A549 (cell line): ENCODE measurements at regions of chr15 and their contacts with region 1.

Region 1: DNA sequence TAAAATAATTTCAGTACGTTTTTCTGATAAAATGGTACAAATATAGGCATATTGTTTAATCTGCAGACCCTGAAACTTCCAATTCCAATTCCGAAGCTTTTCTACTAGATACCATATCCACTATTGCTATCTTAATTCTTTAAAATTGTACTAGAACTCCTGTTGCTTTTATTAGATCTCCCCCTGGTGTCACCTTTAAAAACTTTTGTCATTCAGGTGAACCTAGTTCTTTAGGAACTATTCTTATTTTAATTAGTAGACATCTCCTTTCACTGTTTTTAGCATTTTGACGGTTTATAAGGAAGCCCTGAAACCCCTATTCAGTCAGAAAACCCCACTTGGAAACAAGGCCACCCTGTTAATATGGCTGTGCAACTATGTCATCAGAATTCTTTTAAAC is 22.4 kb downstream of the C2CD4B start:
- DNase-seq: no peak
- ATAC-seq: no peak
- H3K4me3 ChIP-seq: no peak overlapping the region
- H3K27ac ChIP-seq: no peak overlapping the region; a peak in 1 of 6 replicates
- H3K4me1 ChIP-seq: 0 out of 3 replicates have a peak, but pooled peaks cover 6% of the 10 kb centered on the region
- CTCF ChIP-seq: peak; percentile 43
- EP300 ChIP-seq: no peak
- POLR2A ChIP-seq: no peak
- RAD21 ChIP-seq: peak; percentile 59 to 61

Region 2: DNA sequence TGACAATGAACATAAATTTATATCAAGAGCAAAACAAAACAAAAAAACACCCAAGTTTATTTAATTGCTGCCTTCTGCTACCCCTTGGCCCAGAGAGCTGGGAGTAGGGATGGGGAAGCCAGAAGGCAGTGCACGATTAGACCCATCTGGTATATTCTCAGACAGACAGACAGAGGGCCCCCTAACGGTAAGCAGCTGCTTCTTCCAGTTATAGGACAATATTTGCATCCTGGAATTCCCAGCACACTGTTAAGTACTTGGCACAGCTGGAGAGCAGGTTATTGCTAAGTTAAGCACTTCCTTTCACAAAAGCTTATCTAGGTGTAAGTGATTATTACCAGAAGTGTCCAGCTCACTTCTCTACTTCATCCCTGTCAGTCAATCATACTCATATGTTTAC is 17.0 kb before region 1 on chr15:
- CTCF ChIA-PET with region 1: interaction called, 13 read pairs
- POLR2A ChIA-PET with region 1: no interaction called
- DNase-seq: peak in 1 of 2 experiments; percentile 74
- ATAC-seq: peak; percentile 77 to 87
- H3K4me3 ChIP-seq: no peak overlapping the region
- H3K27ac ChIP-seq: peak overlapping the region in 1 of 2 experiments; percentile 67; a peak in 2 of 6 replicates
- H3K4me1 ChIP-seq: peaks cover 24% of the 10 kb centered on the region
- CTCF ChIP-seq: peak; percentile 39
- EP300 ChIP-seq: no peak
- POLR2A ChIP-seq: no peak
- RAD21 ChIP-seq: peak in 1 of 2 experiments; percentile 26; a peak in 2 of 5 replicates

Region 3: DNA sequence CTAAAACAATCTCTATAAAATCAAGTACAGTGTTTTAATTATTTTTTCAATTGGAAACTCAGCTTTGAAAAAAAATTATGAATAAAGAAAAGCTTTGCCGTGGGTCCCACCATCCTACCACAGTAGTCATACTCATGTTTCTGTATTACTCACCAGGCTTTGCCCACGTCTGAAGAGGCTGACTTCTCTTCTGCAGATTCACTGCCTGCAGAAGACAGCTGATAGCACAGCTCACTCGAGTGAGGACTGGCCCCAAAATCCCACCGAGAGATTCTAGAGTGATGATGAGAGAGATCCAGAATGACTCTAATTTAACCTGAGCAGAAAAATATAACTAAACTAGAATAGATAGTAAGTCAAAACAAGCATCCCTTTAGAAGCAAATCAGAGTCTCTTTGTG is 10.5 kb after region 1 on chr15:
- CTCF ChIA-PET with region 1: interaction called, 13 read pairs
- POLR2A ChIA-PET with region 1: interaction called, 3 read pairs
- DNase-seq: no peak
- ATAC-seq: no peak
- H3K4me3 ChIP-seq: no peak overlapping the region
- H3K27ac ChIP-seq: no peak overlapping the region
- H3K4me1 ChIP-seq: no peaks in the 10 kb centered on the region
- CTCF ChIP-seq: no peak
- EP300 ChIP-seq: no peak
- POLR2A ChIP-seq: no peak
- RAD21 ChIP-seq: no peak